ENCODE measurements at regions of chr16 and their contacts with region 1.

Region 1: DNA sequence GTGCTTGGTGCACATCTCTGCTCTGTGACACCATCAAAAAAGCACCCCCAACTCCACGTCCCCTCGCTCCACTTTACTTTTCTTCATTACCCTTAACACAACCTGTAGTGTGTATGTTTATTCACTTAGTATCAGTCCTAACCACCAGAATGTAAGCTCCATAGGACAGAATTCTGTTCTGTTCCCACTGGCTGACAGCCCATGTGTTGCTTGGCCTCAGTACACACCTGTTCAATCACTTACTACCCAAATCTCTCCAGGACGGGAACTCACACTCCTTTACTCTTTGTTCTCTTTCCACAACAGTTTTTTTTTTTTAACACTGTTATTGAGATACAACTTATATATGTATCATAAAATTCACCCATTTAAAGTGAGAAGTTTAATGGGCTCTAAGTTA is 119.6 kb downstream of the MAF start:
- DNase-seq: no peak
- ATAC-seq: no peak
- H3K4me3 ChIP-seq: no peak overlapping the region
- H3K27ac ChIP-seq: no peak overlapping the region
- H3K4me1 ChIP-seq: peaks cover 4% of the 10 kb centered on the region
- H3K27me3 ChIP-seq: no peaks in the 10 kb centered on the region
- CTCF ChIP-seq: no peak

Region 2: DNA sequence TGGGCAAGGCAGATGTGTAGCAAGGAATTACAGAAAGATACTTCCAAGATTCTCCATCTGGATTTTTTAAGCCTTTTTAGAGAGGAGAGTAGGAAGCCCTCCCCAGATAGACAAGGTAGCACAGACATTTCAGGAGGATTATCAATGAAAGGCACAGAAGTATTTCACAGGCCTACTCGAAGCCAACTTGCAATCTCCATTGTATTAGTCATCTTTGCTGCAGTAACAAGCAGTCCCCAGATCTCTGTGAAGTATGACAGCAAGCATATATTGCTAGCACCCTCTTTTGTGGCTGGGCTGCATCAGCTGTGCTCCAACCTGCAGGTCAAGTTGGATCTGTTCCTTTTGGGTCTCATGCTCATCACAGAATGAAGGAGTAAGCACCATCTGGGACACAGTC is 18.0 kb after region 1 on chr16:
- intact Hi-C with region 1: loop called in 1 of 2 experiments (anchors 1 kb)
- DNase-seq: no peak
- ATAC-seq: no peak
- H3K4me3 ChIP-seq: no peak overlapping the region
- H3K27ac ChIP-seq: no peak overlapping the region
- H3K4me1 ChIP-seq: no peaks in the 10 kb centered on the region
- H3K27me3 ChIP-seq: no peaks in the 10 kb centered on the region
- CTCF ChIP-seq: no peak

Region 3: GRCh38 chr16:79542237-79542774 is 61.4 kb after region 1 on chr16:
- intact Hi-C with region 1: no loop called
- DNase-seq: peak; percentile 58 to 83
- ATAC-seq: peak; percentile 83 to 93 (median 88)
- H3K4me3 ChIP-seq: peak overlapping the region; percentile 37
- H3K27ac ChIP-seq: peak overlapping the region; percentile 78
- H3K4me1 ChIP-seq: peaks cover 25% of the 10 kb centered on the region
- H3K27me3 ChIP-seq: no peaks in the 10 kb centered on the region
- CTCF ChIP-seq: no peak

Measured in psoas muscle (tissue), 8 donors.